Panc1 (cell line): ENCODE measurements at regions of chr11 and their contacts with region 1.

Region 1: DNA sequence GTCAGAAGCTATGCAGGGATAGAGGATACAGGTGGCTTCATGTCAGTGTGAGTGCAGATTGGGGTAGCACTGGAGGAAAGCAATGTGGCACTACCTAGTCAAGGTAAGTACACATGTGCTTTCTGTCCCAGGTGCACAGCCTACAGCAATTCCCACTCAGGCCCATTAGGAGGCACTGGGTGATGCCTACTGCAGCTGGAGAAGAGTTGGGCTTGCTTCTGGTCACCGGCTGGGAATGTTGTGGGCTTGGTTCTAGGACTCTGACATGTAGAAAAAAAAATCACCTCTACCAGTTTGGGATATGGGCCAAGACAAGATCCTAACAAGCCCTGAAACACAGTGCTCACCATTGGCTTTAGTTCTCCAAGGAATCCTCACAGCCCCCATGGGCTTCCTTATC is 69.7 kb downstream of the TENM4 start:
- DNase-seq: no peak
- ATAC-seq: no peak
- H3K4me3 ChIP-seq: no peak overlapping the region
- H3K27ac ChIP-seq: no peak overlapping the region
- H3K4me1 ChIP-seq: no peaks in the 10 kb centered on the region
- H3K27me3 ChIP-seq: no peaks in the 10 kb centered on the region
- CTCF ChIP-seq: no peak

Region 2: GRCh38 chr11:79447038-79447786 is 76.1 kb after region 1 on chr11:
- CTCF ChIA-PET with region 1: interaction called, 10 read pairs
- POLR2A ChIA-PET with region 1: no interaction called
- in situ Hi-C with region 1: no loop called
- intact Hi-C with region 1: no loop called
- DNase-seq: no peak
- ATAC-seq: no peak
- H3K4me3 ChIP-seq: no peak overlapping the region
- H3K27ac ChIP-seq: no peak overlapping the region
- H3K4me1 ChIP-seq: no peaks in the 10 kb centered on the region
- H3K27me3 ChIP-seq: peaks cover 32% of the 10 kb centered on the region
- CTCF ChIP-seq: no peak

Region 3: DNA sequence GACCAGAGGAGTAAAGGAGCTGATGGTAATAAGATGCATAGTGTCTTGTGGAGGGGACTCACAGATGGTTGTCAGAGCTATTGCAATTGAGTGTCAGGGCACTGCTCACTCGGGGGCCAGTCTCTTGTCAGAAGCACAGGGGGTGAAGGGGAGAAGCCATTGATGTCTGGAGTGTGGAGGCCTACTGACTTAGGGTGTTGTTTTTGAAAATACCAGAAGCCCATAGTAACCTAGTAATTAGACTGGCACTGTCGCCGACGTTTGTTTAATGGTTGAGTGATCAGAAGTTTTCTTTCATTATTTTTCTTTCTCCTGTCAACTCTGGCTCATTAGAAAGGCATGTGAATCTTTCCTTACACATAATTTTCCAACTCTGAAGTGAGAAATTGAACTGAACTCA is 221.3 kb after region 1 on chr11:
- CTCF ChIA-PET with region 1: no interaction called
- POLR2A ChIA-PET with region 1: no interaction called
- in situ Hi-C with region 1: no loop called
- intact Hi-C with region 1: no loop called
- DNase-seq: no peak
- ATAC-seq: no peak
- H3K4me3 ChIP-seq: no peak overlapping the region
- H3K27ac ChIP-seq: no peak overlapping the region
- H3K4me1 ChIP-seq: no peaks in the 10 kb centered on the region
- H3K27me3 ChIP-seq: no peaks in the 10 kb centered on the region
- CTCF ChIP-seq: no peak

Region 4: DNA sequence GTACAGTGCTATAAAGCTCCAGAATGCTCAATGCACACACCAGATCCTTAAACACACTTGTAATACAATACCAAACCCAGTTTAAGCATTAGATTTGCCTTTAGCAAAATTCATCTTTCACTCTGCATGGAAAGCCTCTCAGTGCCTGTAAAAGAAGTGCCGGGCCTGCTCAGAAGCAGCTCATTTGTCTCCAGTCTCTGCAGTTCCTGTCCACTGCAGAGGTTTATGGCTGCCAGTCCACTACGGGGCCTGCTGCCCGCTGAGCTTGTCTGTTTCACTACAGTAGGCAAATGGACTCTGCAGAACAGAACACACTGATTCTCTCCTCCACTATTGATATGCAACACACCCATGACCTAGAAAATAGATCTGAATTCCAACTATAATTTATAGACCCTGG is 486.2 kb after region 1 on chr11:
- CTCF ChIA-PET with region 1: no interaction called
- POLR2A ChIA-PET with region 1: no interaction called
- in situ Hi-C with region 1: no loop called
- intact Hi-C with region 1: no loop called
- DNase-seq: no peak
- ATAC-seq: no peak
- H3K4me3 ChIP-seq: no peak overlapping the region
- H3K27ac ChIP-seq: no peak overlapping the region
- H3K4me1 ChIP-seq: no peaks in the 10 kb centered on the region
- H3K27me3 ChIP-seq: no peaks in the 10 kb centered on the region
- CTCF ChIP-seq: no peak